Activated naive CD4-positive, alpha-beta T cell treated with anti-CD3 and anti-CD28 coated beads for 36 hours (primary cell): ENCODE measurements at regions of chr7 and their contacts with region 1.

Region 1: GRCh38 chr7:15015545-15016326 is 113.2 kb upstream of the DGKB start:
- DNase-seq: peak; percentile 6
- H3K4me3 Mint-ChIP-seq: no peak overlapping the region
- H3K27ac Mint-ChIP-seq: no peak overlapping the region
- H3K4me1 Mint-ChIP-seq: no peaks in the 10 kb centered on the region
- H3K27me3 Mint-ChIP-seq: no peaks in the 10 kb centered on the region

Region 2: GRCh38 chr7:14698239-14698638 is 317.5 kb before region 1 on chr7:
- CTCF ChIA-PET with region 1: no interaction called
- intact Hi-C with region 1: loop called (anchors 1 kb)
- DNase-seq: no peak
- H3K4me3 Mint-ChIP-seq: no peak overlapping the region
- H3K27ac Mint-ChIP-seq: no peak overlapping the region
- H3K4me1 Mint-ChIP-seq: no peaks in the 10 kb centered on the region
- H3K27me3 Mint-ChIP-seq: no peaks in the 10 kb centered on the region

Region 3: GRCh38 chr7:14717816-14718215 is 297.9 kb before region 1 on chr7:
- CTCF ChIA-PET with region 1: interaction called, 3 read pairs
- intact Hi-C with region 1: loop called (anchors 1 kb)
- DNase-seq: no peak
- H3K4me3 Mint-ChIP-seq: no peak overlapping the region
- H3K27ac Mint-ChIP-seq: no peak overlapping the region
- H3K4me1 Mint-ChIP-seq: peaks cover 2% of the 10 kb centered on the region
- H3K27me3 Mint-ChIP-seq: no peaks in the 10 kb centered on the region

Region 4: GRCh38 chr7:15209429-15209828 is 193.7 kb after region 1 on chr7:
- CTCF ChIA-PET with region 1: no interaction called
- intact Hi-C with region 1: no loop called
- DNase-seq: no peak
- H3K4me3 Mint-ChIP-seq: no peak overlapping the region
- H3K27ac Mint-ChIP-seq: no peak overlapping the region
- H3K4me1 Mint-ChIP-seq: no peaks in the 10 kb centered on the region
- H3K27me3 Mint-ChIP-seq: no peaks in the 10 kb centered on the region